Transverse colon (tissue), 4 donors: ENCODE measurements at regions of chr3 and their contacts with region 1.

Region 1: GRCh38 chr3:39180546-39181346 is 11.6 kb downstream of the XIRP1 start:
- DNase-seq: peak; percentile 97
- H3K4me3 ChIP-seq: peak overlapping the region in 3 of 4 donors; percentile 24 to 42 (median 31)
- H3K27ac ChIP-seq: peak overlapping the region; percentile 79 to 94 (median 80)
- H3K4me1 ChIP-seq: peaks cover 20 to 43% (median 30%) of the 10 kb centered on the region in 4 donors
- H3K27me3 ChIP-seq: no peaks in the 10 kb centered on the region
- CTCF ChIP-seq: peak; percentile 27 to 60 (median 29)
- EP300 ChIP-seq: peak; percentile 72
- POLR2A ChIP-seq: peak; percentile 50

Region 2: DNA sequence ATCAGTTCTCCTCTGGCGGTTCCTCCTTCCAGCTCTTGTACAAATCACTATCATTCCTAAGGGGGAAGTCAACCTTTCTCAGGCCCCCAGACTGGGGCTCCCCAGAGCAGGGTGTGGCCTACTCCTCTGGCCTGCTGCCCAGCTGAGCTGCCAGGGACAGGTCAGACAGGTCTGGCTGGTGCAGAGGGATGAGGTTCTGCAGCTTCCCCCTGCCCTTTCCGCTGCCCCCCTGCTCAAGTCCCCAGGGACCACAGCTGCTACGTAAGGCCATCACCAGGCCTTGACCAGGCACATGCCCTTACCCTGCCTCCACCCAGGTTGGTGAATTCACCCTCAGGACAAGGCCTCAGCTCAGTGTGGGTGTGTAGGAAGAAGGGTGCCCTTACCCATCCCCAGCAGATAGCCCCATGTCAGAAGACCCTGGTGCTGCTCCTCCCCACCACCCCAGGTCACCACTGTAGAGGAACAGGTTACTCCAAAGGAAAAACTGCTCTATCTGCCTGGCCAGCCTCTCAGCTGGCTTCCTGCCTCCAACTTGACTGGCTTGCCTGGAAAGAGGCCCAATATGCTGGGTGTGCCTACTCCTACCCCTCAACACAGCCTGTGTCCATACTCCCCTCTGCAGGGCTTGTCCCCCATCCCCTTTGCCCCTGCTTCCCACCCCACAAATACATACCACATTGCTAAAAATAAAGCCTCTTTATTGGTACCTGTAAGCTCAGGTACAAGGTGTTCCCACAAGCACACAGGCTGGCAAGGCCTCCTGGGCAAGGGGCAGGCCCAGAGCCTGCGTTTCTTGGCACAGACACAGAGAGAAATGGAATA is 39.4 kb before region 1 on chr3:
- in situ Hi-C with region 1: no loop called
- intact Hi-C with region 1: loop called (anchors 5 kb)
- DNase-seq: peak; percentile 91
- H3K4me3 ChIP-seq: no peak overlapping the region
- H3K27ac ChIP-seq: peak overlapping the region; percentile 81 to 92 (median 84)
- H3K4me1 ChIP-seq: peaks cover 38 to 62% (median 51%) of the 10 kb centered on the region in 4 donors
- H3K27me3 ChIP-seq: no peaks in the 10 kb centered on the region
- CTCF ChIP-seq: no peak
- EP300 ChIP-seq: peak; percentile 56
- POLR2A ChIP-seq: peak; percentile 8

Region 3: DNA sequence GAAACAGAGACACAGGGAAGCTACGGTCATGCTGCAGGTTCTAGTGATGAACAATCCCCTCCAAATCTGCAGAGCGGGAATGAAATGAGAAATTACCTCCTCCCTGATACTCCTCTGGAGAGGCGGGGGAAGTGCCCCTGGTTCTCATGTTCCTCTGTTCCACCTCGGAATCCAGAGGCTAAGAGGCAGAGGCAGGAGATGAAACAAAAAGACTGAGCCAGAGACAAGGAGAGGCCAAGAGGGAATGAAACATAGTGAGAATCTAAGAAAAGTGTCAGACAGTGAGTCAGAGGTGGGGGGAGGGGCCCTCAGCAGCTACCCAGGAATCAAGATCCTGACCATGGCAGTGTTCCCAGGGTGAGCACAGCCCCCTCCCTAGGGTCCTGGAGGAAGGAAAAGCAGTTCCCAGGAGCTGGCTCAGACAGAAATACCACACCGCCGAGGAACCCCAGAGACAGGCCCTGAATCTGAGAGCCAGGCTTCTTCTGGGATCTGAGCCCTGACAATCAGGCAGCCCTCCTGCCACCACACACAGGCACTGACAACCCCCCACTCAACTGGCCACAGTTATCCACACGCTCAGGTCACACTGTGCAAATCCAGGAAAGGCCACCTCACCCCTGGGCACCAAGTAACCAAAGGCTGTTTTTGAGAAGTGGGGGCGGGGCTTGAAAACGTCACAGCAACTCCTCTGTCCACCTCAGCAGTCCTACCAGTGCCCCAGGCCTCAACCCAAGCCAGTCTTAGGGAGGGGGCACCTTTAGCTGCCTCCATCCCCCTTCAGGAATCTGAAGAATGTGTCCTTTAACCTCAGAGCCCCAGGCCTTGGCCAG is 29.7 kb before region 1 on chr3:
- in situ Hi-C with region 1: no loop called
- intact Hi-C with region 1: loop called (anchors 1 kb)
- DNase-seq: peak; percentile 81
- H3K4me3 ChIP-seq: peak overlapping the region; percentile 1 to 93 (median 83)
- H3K27ac ChIP-seq: peak overlapping the region; percentile 98 to 99 (median 98)
- H3K4me1 ChIP-seq: peaks cover 56 to 77% (median 73%) of the 10 kb centered on the region in 4 donors
- H3K27me3 ChIP-seq: no peaks in the 10 kb centered on the region
- CTCF ChIP-seq: no peak
- EP300 ChIP-seq: no peak
- POLR2A ChIP-seq: no peak